CD4-positive, alpha-beta T cell (primary cell): ENCODE measurements at regions of chr17 and their contacts with region 1.

Region 1: GRCh38 chr17:82153745-82154375 is 55.8 kb upstream of the FASN start:
- DNase-seq: peak; percentile 76 to 90 (median 82)
- ATAC-seq: peak; percentile 100
- H3K4me3 ChIP-seq: no peak overlapping the region
- H3K4me3 Mint-ChIP-seq: no peak overlapping the region
- H3K27ac ChIP-seq: no peak overlapping the region
- H3K27ac Mint-ChIP-seq: peak overlapping the region; percentile 69
- H3K4me1 ChIP-seq: peaks cover 10% of the 10 kb centered on the region
- H3K4me1 Mint-ChIP-seq: peaks cover 5% of the 10 kb centered on the region
- H3K27me3 ChIP-seq: no peaks in the 10 kb centered on the region
- H3K27me3 Mint-ChIP-seq: no peaks in the 10 kb centered on the region
- CTCF ChIP-seq: peak; percentile 91

Region 2: DNA sequence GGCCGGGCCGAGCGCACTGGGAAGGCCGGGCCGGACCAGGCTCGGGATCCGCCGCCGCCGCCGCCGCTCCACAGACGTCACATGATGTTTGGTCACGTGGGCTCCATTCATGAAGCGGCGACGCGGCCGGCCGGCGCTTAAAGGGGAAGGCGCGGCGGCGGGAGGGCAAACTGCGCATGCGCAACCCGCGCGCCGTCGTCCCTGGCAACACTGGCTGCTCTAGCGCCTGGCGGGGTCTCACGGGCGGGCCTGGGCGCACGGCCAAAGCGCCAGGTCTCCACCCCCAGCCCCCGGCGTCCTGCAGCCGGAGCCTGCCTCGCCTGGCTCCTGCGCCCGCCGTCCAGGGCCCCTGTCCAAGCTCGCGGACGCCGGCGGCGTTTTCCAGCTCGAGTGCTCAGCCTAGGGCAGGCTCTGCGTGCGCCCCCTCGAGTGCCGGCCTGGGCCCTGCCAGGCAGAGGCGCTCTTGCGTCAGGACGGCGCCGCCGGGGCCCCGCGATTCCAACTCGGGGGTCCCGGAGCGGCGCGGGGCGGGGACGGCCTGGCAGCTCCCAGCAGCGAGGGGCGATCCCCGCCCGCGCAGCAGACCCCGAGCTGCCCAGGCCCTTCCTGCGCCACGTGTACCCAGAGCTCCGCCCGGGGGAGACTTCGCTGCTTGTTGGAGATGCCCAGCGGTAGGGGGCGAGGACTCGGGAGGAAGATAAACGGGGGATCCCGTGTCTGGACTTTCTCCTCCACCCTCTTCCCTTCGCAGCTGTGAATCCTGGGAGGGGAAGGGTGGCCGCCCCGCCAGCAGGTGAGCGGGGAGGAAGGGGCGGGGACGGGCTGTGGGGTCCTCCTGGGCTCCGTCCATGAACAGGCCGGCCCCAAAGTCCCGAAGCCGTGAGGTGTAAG is 226.0 kb before region 1 on chr17 and contains the start of gene MAFG:
- CTCF ChIA-PET with region 1: no interaction called
- POLR2A ChIA-PET with region 1: no interaction called
- intact Hi-C with region 1: no loop called
- DNase-seq: peak; percentile 78 to 97 (median 87)
- ATAC-seq: peak; percentile 58
- H3K4me3 ChIP-seq: peak within 1 kb of the TSS; percentile 61
- H3K4me3 Mint-ChIP-seq: peak within 1 kb of the TSS; percentile 88
- H3K27ac ChIP-seq: peak within 1 kb of the TSS; percentile 54 to 65
- H3K27ac Mint-ChIP-seq: peak within 1 kb of the TSS; percentile 88
- H3K4me1 ChIP-seq: peaks cover 51% of the 10 kb centered on the region
- H3K4me1 Mint-ChIP-seq: peaks cover 20% of the 10 kb centered on the region
- H3K27me3 ChIP-seq: peaks cover 19% of the 10 kb centered on the region in 2 experiments
- H3K27me3 Mint-ChIP-seq: peaks cover 16% of the 10 kb centered on the region
- CTCF ChIP-seq: no peak
- total RNA-seq, gene MAFG: 10.8 to 13.3 TPM

Region 3: GRCh38 chr17:82030470-82031302 is 123.2 kb before region 1 on chr17:
- CTCF ChIA-PET with region 1: interaction called, 19 read pairs
- POLR2A ChIA-PET with region 1: interaction called, 5 read pairs
- intact Hi-C with region 1: loop called (anchors 1 kb)
- DNase-seq: peak; percentile 73 to 92 (median 81)
- ATAC-seq: peak; percentile 85
- H3K4me3 ChIP-seq: peak overlapping the region; percentile 53
- H3K4me3 Mint-ChIP-seq: peak overlapping the region; percentile 91
- H3K27ac ChIP-seq: no peak overlapping the region
- H3K27ac Mint-ChIP-seq: no peak overlapping the region
- H3K4me1 ChIP-seq: peaks cover 28% of the 10 kb centered on the region
- H3K4me1 Mint-ChIP-seq: peaks cover 21% of the 10 kb centered on the region
- H3K27me3 ChIP-seq: no peaks in the 10 kb centered on the region
- H3K27me3 Mint-ChIP-seq: no peaks in the 10 kb centered on the region
- CTCF ChIP-seq: peak; percentile 97

Region 4: GRCh38 chr17:82105882-82106687 is 47.8 kb before region 1 on chr17:
- CTCF ChIA-PET with region 1: interaction called, 6 read pairs
- POLR2A ChIA-PET with region 1: interaction called, 3 read pairs
- intact Hi-C with region 1: loop called in 1 of 2 experiments (anchors 5 kb)
- DNase-seq: peak in 13 of 14 experiments; percentile 32 to 78 (median 55)
- ATAC-seq: peak; percentile 70
- H3K4me3 ChIP-seq: peak overlapping the region; percentile 61
- H3K4me3 Mint-ChIP-seq: peak overlapping the region; percentile 83
- H3K27ac ChIP-seq: peak overlapping the region; percentile 79 to 90
- H3K27ac Mint-ChIP-seq: peak overlapping the region; percentile 95
- H3K4me1 ChIP-seq: peaks cover 43% of the 10 kb centered on the region
- H3K4me1 Mint-ChIP-seq: peaks cover 22% of the 10 kb centered on the region
- H3K27me3 ChIP-seq: no peaks in the 10 kb centered on the region
- H3K27me3 Mint-ChIP-seq: no peaks in the 10 kb centered on the region
- CTCF ChIP-seq: peak; percentile 36

Region 5: DNA sequence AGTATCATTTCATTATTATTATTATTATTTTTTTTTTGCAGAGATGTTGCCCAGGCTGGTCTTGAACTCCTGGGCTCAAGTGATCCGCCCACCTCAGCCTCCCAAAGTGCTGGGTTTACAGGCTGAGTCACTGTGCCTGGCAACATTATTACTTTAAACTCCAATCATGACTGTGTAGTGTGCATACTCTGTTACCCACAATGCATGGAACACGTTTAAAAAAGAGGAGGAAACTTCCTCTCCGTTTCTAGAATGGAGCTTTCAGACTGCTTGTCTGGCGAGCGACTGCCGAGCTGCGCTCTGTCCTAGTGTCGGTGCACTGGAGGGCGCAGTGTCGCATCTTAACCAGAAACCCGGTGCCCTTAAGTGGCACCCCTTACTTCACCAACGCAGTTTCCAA is 33.7 kb before region 1 on chr17:
- CTCF ChIA-PET with region 1: interaction called, 7 read pairs
- POLR2A ChIA-PET with region 1: interaction called, 3 read pairs
- intact Hi-C with region 1: loop called (anchors 1 kb)
- DNase-seq: peak in 7 of 14 experiments; percentile 37 to 72 (median 54)
- ATAC-seq: peak; percentile 93
- H3K4me3 ChIP-seq: no peak overlapping the region
- H3K4me3 Mint-ChIP-seq: peak overlapping the region; percentile 52
- H3K27ac ChIP-seq: no peak overlapping the region
- H3K27ac Mint-ChIP-seq: peak overlapping the region; percentile 92
- H3K4me1 ChIP-seq: peaks cover 56% of the 10 kb centered on the region
- H3K4me1 Mint-ChIP-seq: peaks cover 62% of the 10 kb centered on the region
- H3K27me3 ChIP-seq: no peaks in the 10 kb centered on the region
- H3K27me3 Mint-ChIP-seq: no peaks in the 10 kb centered on the region
- CTCF ChIP-seq: no peak